ENCODE measurements at regions of chr3 and their contacts with region 1.

Region 1: GRCh38 chr3:188900421-188900951 is 271.3 kb upstream of the TPRG1 start:
- DNase-seq: no peak
- H3K4me3 ChIP-seq: no peak overlapping the region
- H3K27ac ChIP-seq: peak overlapping the region; percentile 78 to 79
- H3K4me1 ChIP-seq: peaks cover 8 to 21% of the 10 kb centered on the region in 2 donors
- H3K27me3 ChIP-seq: no peaks in the 10 kb centered on the region
- CTCF ChIP-seq: no peak

Region 2: GRCh38 chr3:188941103-188941502 is 40.6 kb after region 1 on chr3:
- intact Hi-C with region 1: loop called (anchors 2 kb)
- DNase-seq: no peak
- H3K4me3 ChIP-seq: no peak overlapping the region
- H3K27ac ChIP-seq: peak overlapping the region; percentile 54 to 98
- H3K4me1 ChIP-seq: peaks cover 7 to 42% of the 10 kb centered on the region in 2 donors
- H3K27me3 ChIP-seq: no peaks in the 10 kb centered on the region
- CTCF ChIP-seq: no peak

Measured in ascending aorta (tissue), 2 donors.